CD14-positive monocyte (primary cell): ENCODE measurements at regions of chr14 and their contacts with region 1.

Region 1: GRCh38 chr14:93073910-93074769 is 41.6 kb downstream of the ITPK1 start:
- DNase-seq: peak; percentile 82 to 92 (median 86)
- H3K4me3 ChIP-seq: peak overlapping the region; percentile 10 to 73 (median 29)
- H3K4me3 Mint-ChIP-seq: peak overlapping the region; percentile 77 to 87
- H3K27ac ChIP-seq: peak overlapping the region; percentile 98
- H3K27ac Mint-ChIP-seq: peak overlapping the region; percentile 98 to 100 (median 99)
- H3K4me1 ChIP-seq: peaks cover 52 to 58% of the 10 kb centered on the region in 2 donors
- H3K4me1 Mint-ChIP-seq: peaks cover 65% of the 10 kb centered on the region
- H3K27me3 ChIP-seq: no peaks in the 10 kb centered on the region
- H3K27me3 Mint-ChIP-seq: peaks cover 0 to 4% (median 0%) of the 10 kb centered on the region in 3 donors
- CTCF ChIP-seq: no peak

Region 2: GRCh38 chr14:93033983-93034670 is 40.0 kb before region 1 on chr14:
- intact Hi-C with region 1: loop called in 1 of 2 experiments (anchors 5 kb)
- DNase-seq: no peak
- H3K4me3 ChIP-seq: peak overlapping the region in 1 of 3 experiments; percentile 54
- H3K4me3 Mint-ChIP-seq: no peak overlapping the region
- H3K27ac ChIP-seq: peak overlapping the region; percentile 67 to 85
- H3K27ac Mint-ChIP-seq: peak overlapping the region; percentile 16 to 95 (median 92)
- H3K4me1 ChIP-seq: peaks cover 57 to 58% of the 10 kb centered on the region in 2 donors
- H3K4me1 Mint-ChIP-seq: peaks cover 66% of the 10 kb centered on the region
- H3K27me3 ChIP-seq: no peaks in the 10 kb centered on the region
- H3K27me3 Mint-ChIP-seq: peaks cover 0 to 3% (median 0%) of the 10 kb centered on the region in 3 donors
- CTCF ChIP-seq: peak; percentile 52

Region 3: GRCh38 chr14:93086441-93087055 is 12.4 kb after region 1 on chr14:
- intact Hi-C with region 1: no loop called
- DNase-seq: peak in 1 of 3 donors; percentile 31
- H3K4me3 ChIP-seq: no peak overlapping the region
- H3K4me3 Mint-ChIP-seq: no peak overlapping the region
- H3K27ac ChIP-seq: peak overlapping the region; percentile 50 to 69
- H3K27ac Mint-ChIP-seq: peak overlapping the region; percentile 49 to 84 (median 79)
- H3K4me1 ChIP-seq: peaks cover 48 to 64% of the 10 kb centered on the region in 2 donors
- H3K4me1 Mint-ChIP-seq: peaks cover 83% of the 10 kb centered on the region
- H3K27me3 ChIP-seq: no peaks in the 10 kb centered on the region
- H3K27me3 Mint-ChIP-seq: peaks cover 0 to 3% (median 0%) of the 10 kb centered on the region in 3 donors
- CTCF ChIP-seq: no peak

Region 4: GRCh38 chr14:93105362-93105761 is 31.2 kb after region 1 on chr14:
- intact Hi-C with region 1: loop called (anchors 5 kb)
- DNase-seq: peak; percentile 77 to 90 (median 81)
- H3K4me3 ChIP-seq: peak overlapping the region in 1 of 3 experiments; percentile 72
- H3K4me3 Mint-ChIP-seq: peak overlapping the region; percentile 27 to 62
- H3K27ac ChIP-seq: peak overlapping the region; percentile 83 to 84
- H3K27ac Mint-ChIP-seq: peak overlapping the region; percentile 89 to 94 (median 93)
- H3K4me1 ChIP-seq: peaks cover 78 to 90% of the 10 kb centered on the region in 2 donors
- H3K4me1 Mint-ChIP-seq: peaks cover 92% of the 10 kb centered on the region
- H3K27me3 ChIP-seq: no peaks in the 10 kb centered on the region
- H3K27me3 Mint-ChIP-seq: peaks cover 0 to 2% (median 0%) of the 10 kb centered on the region in 3 donors
- CTCF ChIP-seq: no peak